PC-9 (cell line): ENCODE measurements at regions of chr1 and their contacts with region 1.

Region 1: GRCh38 chr1:93552741-93553455 is 105.0 kb downstream of the FNBP1L start:
- DNase-seq: no peak
- H3K4me3 ChIP-seq: no peak overlapping the region
- H3K27ac ChIP-seq: no peak overlapping the region
- H3K4me1 ChIP-seq: peaks cover 11% of the 10 kb centered on the region
- H3K27me3 ChIP-seq: no peaks in the 10 kb centered on the region
- CTCF ChIP-seq: no peak

Region 2: GRCh38 chr1:93419344-93419743 is 133.6 kb before region 1 on chr1:
- CTCF ChIA-PET with region 1: interaction called, 10 read pairs
- POLR2A ChIA-PET with region 1: no interaction called
- intact Hi-C with region 1: no loop called
- DNase-seq: no peak
- H3K4me3 ChIP-seq: no peak overlapping the region
- H3K27ac ChIP-seq: no peak overlapping the region
- H3K4me1 ChIP-seq: no peaks in the 10 kb centered on the region
- H3K27me3 ChIP-seq: no peaks in the 10 kb centered on the region
- CTCF ChIP-seq: no peak